ENCODE measurements at regions of chr22 and their contacts with region 1.

Region 1: GRCh38 chr22:29387921-29388758 is at the start of gene AP1B1:
- DNase-seq: peak; percentile 88 to 92 (median 90)
- H3K4me3 ChIP-seq: peak within 1 kb of the TSS; percentile 77 to 91 (median 88)
- H3K4me3 Mint-ChIP-seq: peak within 1 kb of the TSS; percentile 89 to 95
- H3K27ac ChIP-seq: peak within 1 kb of the TSS; percentile 82 to 86
- H3K27ac Mint-ChIP-seq: peak within 1 kb of the TSS; percentile 90 to 96 (median 91)
- H3K4me1 ChIP-seq: peaks cover 50 to 54% of the 10 kb centered on the region in 2 donors
- H3K4me1 Mint-ChIP-seq: peaks cover 52% of the 10 kb centered on the region
- H3K27me3 ChIP-seq: no peaks in the 10 kb centered on the region
- H3K27me3 Mint-ChIP-seq: peaks cover 0 to 3% (median 2%) of the 10 kb centered on the region in 3 donors
- CTCF ChIP-seq: no peak
- polyA plus RNA-seq, gene AP1B1: 29.0 to 102 (median 40.3) TPM

Region 2: GRCh38 chr22:29267858-29268417 is 120.2 kb before region 1 on chr22 and contains the starts of genes EWSR1 and RHBDD3:
- intact Hi-C with region 1: loop called in 1 of 2 experiments (anchors 10 kb)
- DNase-seq: peak; percentile 97 to 98 (median 98)
- H3K4me3 ChIP-seq: peak within 1 kb of the TSS; percentile 68 to 86 (median 80)
- H3K4me3 Mint-ChIP-seq: peak within 1 kb of the TSS; percentile 93 to 98
- H3K27ac ChIP-seq: peak within 1 kb of the TSS; percentile 86 to 100
- H3K27ac Mint-ChIP-seq: peak within 1 kb of the TSS; percentile 97 to 100 (median 100)
- H3K4me1 ChIP-seq: peaks cover 33 to 41% of the 10 kb centered on the region in 2 donors
- H3K4me1 Mint-ChIP-seq: peaks cover 46% of the 10 kb centered on the region
- H3K27me3 ChIP-seq: no peaks in the 10 kb centered on the region
- H3K27me3 Mint-ChIP-seq: peaks cover 0 to 2% (median 0%) of the 10 kb centered on the region in 3 donors
- CTCF ChIP-seq: no peak
- polyA plus RNA-seq, gene EWSR1: 81.2 to 280 (median 136) TPM
- polyA plus RNA-seq, gene RHBDD3: 4.0 to 11.1 (median 4.8) TPM

Region 3: DNA sequence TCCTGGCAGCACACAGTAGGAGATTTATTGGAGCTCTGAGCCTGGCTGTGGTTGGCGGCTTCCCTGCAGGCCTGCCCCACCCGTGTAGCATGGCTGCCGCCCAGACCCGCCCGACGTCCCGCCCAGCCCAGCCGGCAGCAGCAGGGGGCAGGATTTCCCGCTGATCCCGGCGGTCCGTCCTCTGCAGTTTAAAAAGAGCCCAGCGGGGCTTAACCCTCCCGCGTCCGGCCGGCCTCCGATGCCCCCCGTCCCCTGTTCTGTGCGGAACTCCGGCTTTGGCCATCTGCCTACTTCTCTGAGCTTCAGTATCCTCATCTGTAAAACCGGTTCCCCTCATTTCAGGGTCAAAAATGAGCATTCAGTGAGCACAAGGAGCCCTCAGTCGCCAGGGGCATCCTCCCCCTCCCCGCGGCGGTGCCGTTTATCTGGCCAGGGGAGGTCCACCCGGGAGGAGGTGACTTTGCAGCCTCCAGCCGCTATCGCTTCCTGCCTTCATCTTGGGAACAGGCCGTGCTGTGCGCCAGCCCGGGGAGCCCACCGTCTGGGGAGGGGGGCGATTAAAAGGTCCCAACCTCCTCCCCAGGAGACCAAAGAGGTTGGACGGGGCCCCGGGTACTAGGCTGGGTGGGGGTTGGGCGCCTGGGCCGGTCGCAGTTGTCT is 81.8 kb before region 1 on chr22 and contains the start of gene GAS2L1:
- intact Hi-C with region 1: loop called in 1 of 2 experiments (anchors 5 kb)
- DNase-seq: peak; percentile 52 to 61 (median 60)
- H3K4me3 ChIP-seq: peak within 1 kb of the TSS; percentile 42 to 94 (median 90)
- H3K4me3 Mint-ChIP-seq: peak within 1 kb of the TSS; percentile 85 to 92
- H3K27ac ChIP-seq: peak within 1 kb of the TSS in 1 of 2 donors; percentile 73
- H3K27ac Mint-ChIP-seq: peak within 1 kb of the TSS; percentile 50 to 89 (median 84)
- H3K4me1 ChIP-seq: peaks cover 46 to 78% of the 10 kb centered on the region in 2 donors
- H3K4me1 Mint-ChIP-seq: peaks cover 59% of the 10 kb centered on the region
- H3K27me3 ChIP-seq: peaks cover 0 to 32% of the 10 kb centered on the region in 2 donors
- H3K27me3 Mint-ChIP-seq: peaks cover 22 to 41% (median 33%) of the 10 kb centered on the region in 3 donors
- CTCF ChIP-seq: peak; percentile 61
- polyA plus RNA-seq, gene GAS2L1: 14.9 to 20.0 (median 15.7) TPM

Region 4: DNA sequence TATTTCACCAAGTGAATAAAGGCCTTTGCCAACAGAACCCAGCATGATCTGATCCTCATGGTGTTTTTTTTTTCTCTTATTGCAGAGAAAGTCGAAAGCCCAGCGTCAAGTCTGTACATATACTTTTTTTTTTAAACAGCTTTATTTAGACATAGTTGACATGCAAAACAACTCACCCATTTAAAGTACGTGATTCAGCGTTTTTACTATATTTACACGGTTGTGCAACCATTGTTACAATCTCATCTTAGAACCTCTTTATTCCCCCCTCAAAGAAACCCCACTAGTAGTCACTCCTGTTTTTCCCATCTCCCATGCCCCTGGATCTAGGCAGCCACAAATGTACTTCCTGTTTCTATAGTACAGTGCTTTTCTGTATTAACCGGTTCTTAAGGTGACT is 20.8 kb after region 1 on chr22:
- intact Hi-C with region 1: loop called in 1 of 2 experiments (anchors 2 kb)
- DNase-seq: peak in 2 of 3 donors; percentile 47 to 49
- H3K4me3 ChIP-seq: no peak overlapping the region
- H3K4me3 Mint-ChIP-seq: peak overlapping the region in 1 of 2 donors; percentile 36
- H3K27ac ChIP-seq: no peak overlapping the region
- H3K27ac Mint-ChIP-seq: peak overlapping the region; percentile 8 to 90 (median 66)
- H3K4me1 ChIP-seq: peaks cover 30 to 36% of the 10 kb centered on the region in 2 donors
- H3K4me1 Mint-ChIP-seq: peaks cover 34% of the 10 kb centered on the region
- H3K27me3 ChIP-seq: no peaks in the 10 kb centered on the region
- H3K27me3 Mint-ChIP-seq: peaks cover 0 to 5% (median 1%) of the 10 kb centered on the region in 3 donors
- CTCF ChIP-seq: no peak

Measured in CD14-positive monocyte (primary cell).